Tibial artery (tissue), 4 donors: ENCODE measurements at regions of chr7 and their contacts with region 1.

Region 1: DNA sequence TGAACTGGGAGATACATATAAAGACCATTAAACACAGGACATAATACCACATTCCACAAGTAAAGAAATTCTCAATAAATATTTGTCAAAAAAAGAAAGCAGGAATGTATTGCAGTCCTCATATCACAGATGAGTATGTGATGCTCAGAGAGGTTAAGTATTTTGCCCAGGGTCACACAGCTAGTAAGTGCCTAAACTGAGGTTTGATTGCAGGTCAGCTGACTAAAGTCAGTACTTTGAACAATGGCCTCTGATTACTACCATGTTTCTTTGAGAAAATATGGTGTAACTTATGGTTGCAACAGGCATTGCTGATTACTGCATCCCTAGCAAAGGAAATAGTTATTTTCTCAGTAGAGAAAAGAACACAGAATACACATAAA is 267.1 kb downstream of the ELMO1 start:
- DNase-seq: no peak
- H3K4me3 ChIP-seq: no peak overlapping the region
- H3K27ac ChIP-seq: no peak overlapping the region
- H3K4me1 ChIP-seq: peaks cover 0 to 9% (median 2%) of the 10 kb centered on the region in 4 donors
- H3K27me3 ChIP-seq: no peaks in the 10 kb centered on the region
- CTCF ChIP-seq: no peak

Region 2: DNA sequence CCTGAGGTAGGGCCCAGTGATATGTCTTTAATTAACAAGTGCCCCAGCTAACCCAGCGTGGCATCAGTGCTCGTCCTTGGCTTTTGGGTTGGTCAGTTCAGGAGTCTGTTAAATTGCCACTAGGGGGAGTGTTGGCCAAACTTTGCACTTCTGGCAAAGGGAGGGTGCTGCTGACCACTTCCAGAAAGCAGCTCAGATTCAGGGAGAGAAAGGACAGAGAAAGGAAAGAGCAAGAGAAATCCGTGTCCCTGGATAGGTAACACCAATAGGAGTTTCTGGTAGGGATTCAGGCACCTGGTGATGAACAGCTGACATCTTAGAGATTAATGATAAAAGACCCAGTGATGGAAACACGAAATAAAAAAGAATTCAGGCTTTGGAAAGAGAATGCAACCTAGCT is 214.2 kb before region 1 on chr7:
- intact Hi-C with region 1: loop called (anchors 5 kb)
- DNase-seq: peak; percentile 53 to 71
- H3K4me3 ChIP-seq: no peak overlapping the region
- H3K27ac ChIP-seq: no peak overlapping the region
- H3K4me1 ChIP-seq: peaks cover 0 to 6% (median 0%) of the 10 kb centered on the region in 4 donors
- H3K27me3 ChIP-seq: no peaks in the 10 kb centered on the region
- CTCF ChIP-seq: peak; percentile 68 to 78

Region 3: GRCh38 chr7:36986429-36987362 is 194.8 kb before region 1 on chr7:
- intact Hi-C with region 1: loop called (anchors 5 kb)
- DNase-seq: peak; percentile 73 to 76
- H3K4me3 ChIP-seq: no peak overlapping the region
- H3K27ac ChIP-seq: no peak overlapping the region
- H3K4me1 ChIP-seq: peaks cover 0 to 7% (median 3%) of the 10 kb centered on the region in 4 donors
- H3K27me3 ChIP-seq: no peaks in the 10 kb centered on the region
- CTCF ChIP-seq: peak; percentile 80 to 88